PC-3 (cell line): ENCODE measurements at regions of chr2 and their contacts with region 1.

Region 1: GRCh38 chr2:189836657-189837056 is 52.4 kb downstream of the PMS1 start:
- DNase-seq: peak; percentile 80
- ATAC-seq: peak; percentile 96
- H3K4me3 ChIP-seq: peak overlapping the region; percentile 3; the same call in 1 of the 2 replicates
- H3K27ac ChIP-seq: peak overlapping the region; percentile 65
- H3K4me1 ChIP-seq: peaks cover 17% of the 10 kb centered on the region
- H3K27me3 ChIP-seq: no peaks in the 10 kb centered on the region
- CTCF ChIP-seq: no peak

Region 2: GRCh38 chr2:189821953-189822748 is 14.5 kb before region 1 on chr2:
- CTCF ChIA-PET with region 1: no interaction called
- POLR2A ChIA-PET with region 1: no interaction called
- intact Hi-C with region 1: no loop called
- DNase-seq: no peak
- ATAC-seq: no peak
- H3K4me3 ChIP-seq: no peak overlapping the region
- H3K27ac ChIP-seq: no peak overlapping the region
- H3K4me1 ChIP-seq: no peaks in the 10 kb centered on the region
- H3K27me3 ChIP-seq: no peaks in the 10 kb centered on the region
- CTCF ChIP-seq: no peak

Region 3: DNA sequence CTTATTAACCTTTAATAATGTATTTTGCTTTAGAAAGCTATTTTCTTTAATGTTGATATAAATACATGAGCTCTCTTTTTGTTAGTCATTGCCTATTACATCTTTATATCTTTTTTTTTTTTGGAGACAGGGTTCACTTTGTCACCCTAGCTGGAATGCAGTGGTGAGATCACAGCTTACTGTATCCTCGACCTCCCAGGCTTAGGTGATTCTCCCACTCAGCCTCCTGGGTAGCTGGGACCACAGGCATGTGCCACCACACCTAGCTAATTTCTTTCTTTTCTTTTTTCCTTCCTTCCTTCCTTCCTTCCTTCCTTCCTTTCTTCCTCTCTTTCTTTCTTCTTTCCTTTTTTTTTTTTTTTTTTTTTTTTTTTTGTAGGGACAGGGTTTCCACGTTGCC is 827.6 kb after region 1 on chr2:
- CTCF ChIA-PET with region 1: no interaction called
- POLR2A ChIA-PET with region 1: interaction called, 22 read pairs
- intact Hi-C with region 1: no loop called
- DNase-seq: no peak
- ATAC-seq: no peak
- H3K4me3 ChIP-seq: no peak overlapping the region
- H3K27ac ChIP-seq: no peak overlapping the region
- H3K4me1 ChIP-seq: peaks cover 31% of the 10 kb centered on the region
- H3K27me3 ChIP-seq: no peaks in the 10 kb centered on the region
- CTCF ChIP-seq: no peak